ENCODE measurements at regions of chr9 and their contacts with region 1.

Region 1: GRCh38 chr9:133030317-133031129 is at the start of gene GTF3C5:
- DNase-seq: peak; percentile 99
- H3K4me3 Mint-ChIP-seq: peak within 1 kb of the TSS; percentile 99
- H3K27ac Mint-ChIP-seq: peak within 1 kb of the TSS; percentile 99
- H3K4me1 Mint-ChIP-seq: peaks cover 29% of the 10 kb centered on the region
- H3K27me3 Mint-ChIP-seq: no peaks in the 10 kb centered on the region
- CTCF ChIP-seq: no peak
- total RNA-seq, gene GTF3C5: 53.9 and 55.4 TPM in 2 replicates

Region 2: GRCh38 chr9:132141344-132141947 is 889.1 kb before region 1 on chr9:
- CTCF ChIA-PET with region 1: no interaction called
- POLR2A ChIA-PET with region 1: no interaction called
- intact Hi-C with region 1: no loop called
- DNase-seq: no peak
- H3K4me3 Mint-ChIP-seq: peak overlapping the region; percentile 64
- H3K27ac Mint-ChIP-seq: no peak overlapping the region
- H3K4me1 Mint-ChIP-seq: peaks cover 13% of the 10 kb centered on the region
- H3K27me3 Mint-ChIP-seq: peaks cover 73% of the 10 kb centered on the region
- CTCF ChIP-seq: no peak

Region 3: DNA sequence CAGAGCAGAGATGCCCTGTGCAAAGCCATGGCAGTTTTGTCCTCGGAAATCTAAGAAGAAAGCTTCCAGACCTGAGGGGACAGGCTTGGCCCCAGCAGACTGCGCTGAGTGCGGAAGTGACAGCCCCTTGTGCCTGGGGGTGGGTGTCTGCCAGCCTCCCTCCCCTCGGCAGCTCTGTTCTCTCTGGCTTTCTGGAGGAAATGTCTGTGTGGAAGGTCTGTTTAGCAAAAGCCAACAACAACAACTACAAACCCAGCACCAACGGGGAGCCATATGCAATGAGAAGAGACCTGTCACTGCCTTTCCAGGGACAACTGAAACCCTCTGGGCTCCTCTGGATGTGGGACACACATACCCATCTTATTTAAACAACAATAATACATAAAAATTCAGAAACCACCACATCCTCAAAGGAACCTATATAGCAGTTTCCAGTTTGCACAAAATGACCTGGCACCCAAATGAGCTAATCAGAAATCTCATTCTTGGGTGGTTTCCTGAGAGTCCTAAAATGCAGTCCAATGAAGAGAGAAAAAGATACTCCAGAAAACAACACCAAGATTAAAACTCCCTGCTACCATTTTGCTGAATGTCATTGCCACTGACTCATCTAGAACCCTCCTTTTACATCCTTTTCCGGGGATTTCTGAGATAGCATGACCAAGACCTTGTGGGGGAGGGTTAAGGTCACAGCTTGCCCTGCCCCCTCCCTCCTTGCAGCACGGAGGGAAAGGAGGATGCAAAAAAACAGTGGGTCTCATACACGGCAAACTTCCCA is 250.1 kb before region 1 on chr9:
- CTCF ChIA-PET with region 1: no interaction called
- POLR2A ChIA-PET with region 1: no interaction called
- intact Hi-C with region 1: no loop called
- DNase-seq: no peak
- H3K4me3 Mint-ChIP-seq: no peak overlapping the region
- H3K27ac Mint-ChIP-seq: no peak overlapping the region
- H3K4me1 Mint-ChIP-seq: no peaks in the 10 kb centered on the region
- H3K27me3 Mint-ChIP-seq: peaks cover 35% of the 10 kb centered on the region
- CTCF ChIP-seq: no peak

Region 4: GRCh38 chr9:132944302-132945185 is 86.0 kb before region 1 on chr9 and contains the start of gene TSC1:
- CTCF ChIA-PET with region 1: no interaction called
- POLR2A ChIA-PET with region 1: interaction called, 32 read pairs
- intact Hi-C with region 1: no loop called
- DNase-seq: peak; percentile 93
- H3K4me3 Mint-ChIP-seq: peak within 1 kb of the TSS; percentile 94
- H3K27ac Mint-ChIP-seq: peak within 1 kb of the TSS; percentile 100
- H3K4me1 Mint-ChIP-seq: peaks cover 25% of the 10 kb centered on the region
- H3K27me3 Mint-ChIP-seq: no peaks in the 10 kb centered on the region
- CTCF ChIP-seq: no peak
- total RNA-seq, gene TSC1: 36.6 and 48.5 TPM in 2 replicates

Region 5: DNA sequence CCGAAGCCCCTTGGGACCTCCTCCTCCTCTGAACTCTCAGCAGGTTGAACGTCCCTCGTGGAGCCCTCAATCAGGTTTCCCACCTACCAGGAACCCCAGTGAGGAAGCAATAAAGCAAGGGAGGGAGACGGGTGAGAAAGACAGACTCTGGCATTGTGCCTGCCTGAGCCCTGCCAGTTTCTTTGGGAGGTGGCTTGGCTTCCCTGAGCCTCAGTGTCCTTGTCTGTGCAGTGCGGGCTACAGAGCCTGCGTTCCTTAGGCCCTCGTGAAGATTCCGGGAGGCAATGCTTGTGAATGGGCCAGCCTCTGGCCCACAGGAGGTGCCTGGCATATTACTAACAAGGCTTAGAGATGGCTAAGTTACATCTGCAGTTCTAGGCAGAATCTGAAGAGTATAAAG is 12.2 kb after region 1 on chr9:
- CTCF ChIA-PET with region 1: interaction called, 6 read pairs
- POLR2A ChIA-PET with region 1: interaction called, 12 read pairs
- intact Hi-C with region 1: no loop called
- DNase-seq: no peak
- H3K4me3 Mint-ChIP-seq: no peak overlapping the region
- H3K27ac Mint-ChIP-seq: no peak overlapping the region
- H3K4me1 Mint-ChIP-seq: no peaks in the 10 kb centered on the region
- H3K27me3 Mint-ChIP-seq: no peaks in the 10 kb centered on the region
- CTCF ChIP-seq: no peak

Region 6: DNA sequence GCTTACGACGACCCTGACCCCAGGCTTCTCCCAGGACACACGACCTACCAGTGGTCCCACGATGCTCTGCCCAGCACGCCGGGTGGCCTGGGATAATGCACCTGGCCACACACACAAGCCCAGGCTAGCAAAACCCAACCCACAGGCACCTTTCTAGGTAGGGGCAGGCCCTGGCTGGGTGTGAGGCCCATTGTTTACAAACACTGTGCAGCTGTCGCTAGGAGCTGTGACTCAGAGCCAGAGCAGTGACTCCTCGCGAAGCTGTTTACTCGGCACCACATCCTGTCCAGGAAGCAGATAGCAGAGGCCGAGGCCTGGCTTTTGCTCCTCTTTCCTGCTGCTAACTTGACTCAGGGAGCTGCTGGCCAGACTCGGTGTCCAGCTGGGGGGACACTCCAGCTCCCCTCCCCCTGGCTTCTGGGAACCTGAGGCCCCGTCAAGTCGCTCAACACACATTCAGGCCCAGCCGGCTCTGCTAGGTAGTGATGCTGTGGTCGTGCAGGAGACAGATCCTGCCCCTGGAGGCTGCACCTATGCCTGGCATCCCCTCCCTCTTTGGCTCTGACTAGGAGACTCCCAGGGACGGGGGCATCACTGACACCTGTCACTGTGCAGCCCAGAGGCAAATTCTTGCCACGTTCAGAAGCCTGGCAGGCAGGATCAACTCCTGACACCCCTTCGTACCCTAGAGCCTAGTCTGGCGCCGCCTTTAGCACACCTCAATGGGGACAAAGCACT is 103.3 kb after region 1 on chr9:
- CTCF ChIA-PET with region 1: interaction called, 3 read pairs
- POLR2A ChIA-PET with region 1: interaction called, 41 read pairs
- intact Hi-C with region 1: no loop called
- DNase-seq: peak; percentile 98
- H3K4me3 Mint-ChIP-seq: peak overlapping the region; percentile 44
- H3K27ac Mint-ChIP-seq: peak overlapping the region; percentile 98
- H3K4me1 Mint-ChIP-seq: peaks cover 27% of the 10 kb centered on the region
- H3K27me3 Mint-ChIP-seq: no peaks in the 10 kb centered on the region
- CTCF ChIP-seq: no peak

Region 7: GRCh38 chr9:133149126-133150107 is 118.9 kb after region 1 on chr9:
- CTCF ChIA-PET with region 1: interaction called, 19 read pairs
- POLR2A ChIA-PET with region 1: interaction called, 33 read pairs
- intact Hi-C with region 1: loop called (anchors 5 kb)
- DNase-seq: peak; percentile 85
- H3K4me3 Mint-ChIP-seq: peak overlapping the region; percentile 69
- H3K27ac Mint-ChIP-seq: peak overlapping the region; percentile 83
- H3K4me1 Mint-ChIP-seq: peaks cover 18% of the 10 kb centered on the region
- H3K27me3 Mint-ChIP-seq: no peaks in the 10 kb centered on the region
- CTCF ChIP-seq: peak; percentile 28